IMR-90 (cell line): ENCODE measurements at regions of chr22 and their contacts with region 1.

Region 1: GRCh38 chr22:23849009-23850006 is 8.4 kb upstream of the SLC2A11 start:
- DNase-seq: peak; percentile 51
- ATAC-seq: peak; percentile 98
- H3K4me3 ChIP-seq: no peak overlapping the region
- H3K27ac ChIP-seq: no peak overlapping the region
- H3K4me1 ChIP-seq: peaks cover 17% of the 10 kb centered on the region
- H3K27me3 ChIP-seq: no peaks in the 10 kb centered on the region
- CTCF ChIP-seq: peak; percentile 99
- POLR2A ChIP-seq: peak; percentile 48; the same call in 1 of the 2 replicates
- RAD21 ChIP-seq: peak; percentile 98

Region 2: GRCh38 chr22:23521441-23522113 is 327.7 kb before region 1 on chr22:
- CTCF ChIA-PET with region 1: no interaction called
- POLR2A ChIA-PET with region 1: no interaction called
- dilution Hi-C with region 1: no loop called
- in situ Hi-C with region 1: loop called (anchors 10 kb)
- intact Hi-C with region 1: no loop called
- DNase-seq: peak; percentile 75
- ATAC-seq: peak; percentile 95
- H3K4me3 ChIP-seq: peak overlapping the region; percentile 28
- H3K27ac ChIP-seq: peak overlapping the region; percentile 83
- H3K4me1 ChIP-seq: peaks cover 9% of the 10 kb centered on the region
- H3K27me3 ChIP-seq: no peaks in the 10 kb centered on the region
- CTCF ChIP-seq: peak; percentile 16; the same call in 1 of the 2 replicates
- POLR2A ChIP-seq: peak; percentile 67; the same call in 1 of the 2 replicates
- RAD21 ChIP-seq: no peak

Region 3: GRCh38 chr22:23622634-23623033 is 226.7 kb before region 1 on chr22:
- CTCF ChIA-PET with region 1: no interaction called
- POLR2A ChIA-PET with region 1: no interaction called
- dilution Hi-C with region 1: no loop called
- in situ Hi-C with region 1: loop called (anchors 10 kb)
- intact Hi-C with region 1: loop called (anchors 5 kb)
- DNase-seq: peak; percentile 35
- ATAC-seq: peak; percentile 59; the same call in 1 of the 2 replicates
- H3K4me3 ChIP-seq: no peak overlapping the region
- H3K27ac ChIP-seq: no peak overlapping the region
- H3K4me1 ChIP-seq: no peaks in the 10 kb centered on the region
- H3K27me3 ChIP-seq: no peaks in the 10 kb centered on the region
- CTCF ChIP-seq: no peak
- POLR2A ChIP-seq: no peak
- RAD21 ChIP-seq: no peak

Region 4: GRCh38 chr22:23655891-23656475 is 193.3 kb before region 1 on chr22:
- CTCF ChIA-PET with region 1: no interaction called
- POLR2A ChIA-PET with region 1: no interaction called
- dilution Hi-C with region 1: no loop called
- in situ Hi-C with region 1: no loop called
- intact Hi-C with region 1: no loop called
- DNase-seq: no peak
- ATAC-seq: no peak
- H3K4me3 ChIP-seq: no peak overlapping the region
- H3K27ac ChIP-seq: no peak overlapping the region
- H3K4me1 ChIP-seq: no peaks in the 10 kb centered on the region
- H3K27me3 ChIP-seq: no peaks in the 10 kb centered on the region
- CTCF ChIP-seq: no peak
- POLR2A ChIP-seq: no peak
- RAD21 ChIP-seq: no peak

Region 5: GRCh38 chr22:23767673-23768548 is 81.4 kb before region 1 on chr22 and contains the start of gene CHCHD10:
- CTCF ChIA-PET with region 1: interaction called, 10 read pairs
- POLR2A ChIA-PET with region 1: no interaction called
- dilution Hi-C with region 1: no loop called
- in situ Hi-C with region 1: no loop called
- intact Hi-C with region 1: loop called (anchors 5 kb)
- DNase-seq: peak; percentile 50
- ATAC-seq: peak; percentile 57
- H3K4me3 ChIP-seq: peak within 1 kb of the TSS; percentile 43
- H3K27ac ChIP-seq: no peak within 1 kb of the TSS
- H3K4me1 ChIP-seq: peaks cover 10% of the 10 kb centered on the region
- H3K27me3 ChIP-seq: no peaks in the 10 kb centered on the region
- CTCF ChIP-seq: peak; percentile 75
- POLR2A ChIP-seq: no peak
- RAD21 ChIP-seq: peak; percentile 65
- total RNA-seq, gene CHCHD10: 1.4 and 2.2 TPM in 2 replicates